ENCODE measurements at regions of chr4 and their contacts with region 1.

Region 1: GRCh38 chr4:139554893-139555704 is 920 bp downstream of the SETD7 start:
- DNase-seq: peak; percentile 71
- ATAC-seq: peak; percentile 60
- H3K4me3 Mint-ChIP-seq: peak overlapping the region; percentile 95
- H3K27ac Mint-ChIP-seq: peak overlapping the region; percentile 94
- H3K4me1 Mint-ChIP-seq: peaks cover 59% of the 10 kb centered on the region
- H3K27me3 Mint-ChIP-seq: no peaks in the 10 kb centered on the region
- CTCF ChIP-seq: no peak

Region 2: DNA sequence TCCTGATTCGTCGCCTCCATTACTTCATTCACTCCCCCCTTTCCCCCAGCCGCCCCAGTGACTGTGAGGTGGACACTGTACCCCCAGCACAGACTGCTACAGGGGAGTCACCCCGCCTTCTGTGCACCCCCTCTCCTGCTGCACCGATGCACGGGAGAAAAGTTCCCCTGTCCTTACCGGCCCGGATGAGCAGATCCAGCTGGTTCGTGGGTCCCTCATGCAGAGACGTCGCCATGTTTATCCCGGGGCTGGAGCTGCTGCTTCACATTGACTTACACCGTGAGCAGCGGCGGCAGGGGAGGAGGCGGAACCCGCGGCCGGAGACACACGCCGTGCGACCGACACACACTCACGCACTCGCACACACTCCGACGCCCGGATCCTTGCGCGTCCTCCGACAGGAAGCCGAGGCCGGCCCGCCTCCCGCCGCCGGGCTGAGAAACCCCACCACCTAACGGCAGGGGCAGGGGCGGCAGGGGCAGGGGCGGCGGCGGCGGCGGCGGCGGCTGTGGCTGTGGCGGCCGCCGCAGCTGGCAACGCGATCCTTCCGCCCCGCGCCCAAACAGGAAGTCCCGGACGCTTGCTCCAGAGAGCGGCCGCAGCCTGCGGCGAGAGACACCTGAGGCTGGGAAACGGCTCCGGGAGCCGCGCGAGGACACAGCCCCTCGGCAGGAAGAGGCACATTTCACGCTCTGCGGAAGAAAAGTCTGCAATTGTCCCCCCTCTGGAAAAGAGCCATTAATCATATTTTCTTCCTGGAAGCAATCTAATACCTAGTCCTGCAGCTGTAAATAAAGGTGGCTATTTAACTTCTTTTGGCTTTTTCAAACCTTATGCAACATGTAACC is 470.9 kb before region 1 on chr4:
- CTCF ChIA-PET with region 1: no interaction called
- POLR2A ChIA-PET with region 1: interaction called, 3 read pairs
- intact Hi-C with region 1: loop called (anchors 1 kb)
- DNase-seq: peak; percentile 79
- ATAC-seq: peak; percentile 66
- H3K4me3 Mint-ChIP-seq: peak overlapping the region; percentile 99
- H3K27ac Mint-ChIP-seq: peak overlapping the region; percentile 99
- H3K4me1 Mint-ChIP-seq: peaks cover 38% of the 10 kb centered on the region
- H3K27me3 Mint-ChIP-seq: no peaks in the 10 kb centered on the region
- CTCF ChIP-seq: no peak

Region 3: GRCh38 chr4:139503622-139504166 is 51.4 kb before region 1 on chr4:
- CTCF ChIA-PET with region 1: no interaction called
- POLR2A ChIA-PET with region 1: no interaction called
- intact Hi-C with region 1: no loop called
- DNase-seq: no peak
- ATAC-seq: no peak
- H3K4me3 Mint-ChIP-seq: no peak overlapping the region
- H3K27ac Mint-ChIP-seq: no peak overlapping the region
- H3K4me1 Mint-ChIP-seq: no peaks in the 10 kb centered on the region
- H3K27me3 Mint-ChIP-seq: no peaks in the 10 kb centered on the region
- CTCF ChIP-seq: no peak

Region 4: GRCh38 chr4:139530833-139531427 is 24.2 kb before region 1 on chr4:
- CTCF ChIA-PET with region 1: no interaction called
- POLR2A ChIA-PET with region 1: interaction called, 4 read pairs
- intact Hi-C with region 1: loop called (anchors 2 kb)
- DNase-seq: peak; percentile 19
- ATAC-seq: peak; percentile 60
- H3K4me3 Mint-ChIP-seq: no peak overlapping the region
- H3K27ac Mint-ChIP-seq: no peak overlapping the region
- H3K4me1 Mint-ChIP-seq: peaks cover 4% of the 10 kb centered on the region
- H3K27me3 Mint-ChIP-seq: no peaks in the 10 kb centered on the region
- CTCF ChIP-seq: no peak

Region 5: DNA sequence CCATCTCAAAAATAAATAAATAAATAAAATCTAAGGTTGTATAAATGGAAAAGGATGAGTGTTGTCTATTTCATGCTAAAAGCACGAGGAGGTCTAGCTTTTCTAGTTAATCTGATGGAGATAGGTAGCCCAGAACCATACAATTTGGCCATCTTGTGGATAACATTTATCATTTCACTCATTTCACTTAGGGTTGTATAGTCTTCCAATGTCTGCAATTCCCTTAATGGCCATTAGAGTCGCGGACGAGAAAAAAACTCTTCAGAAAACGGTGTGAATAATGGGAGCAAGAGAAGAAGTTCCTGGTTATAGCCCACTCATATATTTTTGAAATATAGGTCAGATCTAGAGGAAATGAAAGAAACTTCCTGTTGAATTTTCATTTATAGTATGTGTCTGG is 62.6 kb after region 1 on chr4:
- CTCF ChIA-PET with region 1: no interaction called
- POLR2A ChIA-PET with region 1: no interaction called
- intact Hi-C with region 1: no loop called
- DNase-seq: no peak
- ATAC-seq: no peak
- H3K4me3 Mint-ChIP-seq: no peak overlapping the region
- H3K27ac Mint-ChIP-seq: no peak overlapping the region
- H3K4me1 Mint-ChIP-seq: no peaks in the 10 kb centered on the region
- H3K27me3 Mint-ChIP-seq: peaks cover 4% of the 10 kb centered on the region
- CTCF ChIP-seq: no peak

Region 6: GRCh38 chr4:139674875-139675550 is 119.9 kb after region 1 on chr4:
- CTCF ChIA-PET with region 1: no interaction called
- POLR2A ChIA-PET with region 1: no interaction called
- intact Hi-C with region 1: no loop called
- DNase-seq: no peak
- ATAC-seq: peak; percentile 94
- H3K4me3 Mint-ChIP-seq: peak overlapping the region; percentile 21
- H3K27ac Mint-ChIP-seq: peak overlapping the region; percentile 13
- H3K4me1 Mint-ChIP-seq: peaks cover 13% of the 10 kb centered on the region
- H3K27me3 Mint-ChIP-seq: no peaks in the 10 kb centered on the region
- CTCF ChIP-seq: no peak

Region 7: GRCh38 chr4:140252742-140253555 is 697.9 kb after region 1 on chr4:
- CTCF ChIA-PET with region 1: no interaction called
- POLR2A ChIA-PET with region 1: no interaction called
- intact Hi-C with region 1: loop called (anchors 5 kb)
- DNase-seq: peak; percentile 67
- ATAC-seq: peak; percentile 83
- H3K4me3 Mint-ChIP-seq: peak overlapping the region; percentile 72
- H3K27ac Mint-ChIP-seq: no peak overlapping the region
- H3K4me1 Mint-ChIP-seq: peaks cover 8% of the 10 kb centered on the region
- H3K27me3 Mint-ChIP-seq: peaks cover 25% of the 10 kb centered on the region
- CTCF ChIP-seq: peak; percentile 82

Region 8: GRCh38 chr4:140523857-140524742 is 969.0 kb after region 1 on chr4 and contains the start of gene ELMOD2:
- CTCF ChIA-PET with region 1: no interaction called
- POLR2A ChIA-PET with region 1: interaction called, 4 read pairs
- intact Hi-C with region 1: loop called (anchors 2 kb)
- DNase-seq: peak; percentile 94
- ATAC-seq: peak; percentile 99
- H3K4me3 Mint-ChIP-seq: peak within 1 kb of the TSS; percentile 90
- H3K27ac Mint-ChIP-seq: peak within 1 kb of the TSS; percentile 84
- H3K4me1 Mint-ChIP-seq: peaks cover 14% of the 10 kb centered on the region
- H3K27me3 Mint-ChIP-seq: no peaks in the 10 kb centered on the region
- CTCF ChIP-seq: peak; percentile 72
- total RNA-seq, gene ELMOD2: 20.4 and 20.8 TPM in 2 replicates